T-cell (primary cell): ENCODE measurements at regions of chr2 and their contacts with region 1.

Region 1: GRCh38 chr2:148880636-148881035 is 5.6 kb downstream of the KIF5C start:
- DNase-seq: no peak
- ATAC-seq: no peak
- H3K4me3 ChIP-seq: no peak overlapping the region
- H3K4me3 Mint-ChIP-seq: no peak overlapping the region
- H3K27ac ChIP-seq: no peak overlapping the region
- H3K27ac Mint-ChIP-seq: no peak overlapping the region
- H3K4me1 ChIP-seq: peaks cover 4 to 16% of the 10 kb centered on the region in 2 experiments
- H3K4me1 Mint-ChIP-seq: peaks cover 8 to 15% (median 9%) of the 10 kb centered on the region in 3 donors
- H3K27me3 ChIP-seq: peaks cover 4 to 15% of the 10 kb centered on the region in 2 experiments
- H3K27me3 Mint-ChIP-seq: peaks cover 4 to 14% of the 10 kb centered on the region in 2 donors

Region 2: GRCh38 chr2:148402786-148403185 is 477.9 kb before region 1 on chr2:
- CTCF ChIA-PET with region 1: no interaction called
- POLR2A ChIA-PET with region 1: interaction called in 1 of 2 experiments, 13 read pairs
- DNase-seq: no peak
- ATAC-seq: no peak
- H3K4me3 ChIP-seq: no peak overlapping the region
- H3K4me3 Mint-ChIP-seq: no peak overlapping the region
- H3K27ac ChIP-seq: no peak overlapping the region
- H3K27ac Mint-ChIP-seq: no peak overlapping the region
- H3K4me1 ChIP-seq: no peaks in the 10 kb centered on the region
- H3K4me1 Mint-ChIP-seq: peaks cover 9 to 15% (median 9%) of the 10 kb centered on the region in 3 donors
- H3K27me3 ChIP-seq: no peaks in the 10 kb centered on the region
- H3K27me3 Mint-ChIP-seq: no peaks in the 10 kb centered on the region